ENCODE measurements at regions of chrX and their contacts with region 1.

Region 1: GRCh38 chrX:12174358-12174757 is 36.1 kb downstream of the FRMPD4 start:
- DNase-seq: no peak
- H3K4me3 ChIP-seq: no peak overlapping the region
- H3K27ac ChIP-seq: no peak overlapping the region
- H3K4me1 ChIP-seq: no peaks in the 10 kb centered on the region
- H3K27me3 ChIP-seq: peaks cover 0 to 47% of the 10 kb centered on the region in 2 donors
- CTCF ChIP-seq: no peak
- POLR2A ChIP-seq: no peak

Region 2: GRCh38 chrX:12142661-12143060 is 31.7 kb before region 1 on chrX:
- intact Hi-C with region 1: loop called (anchors 2 kb)
- DNase-seq: no peak
- H3K4me3 ChIP-seq: no peak overlapping the region
- H3K27ac ChIP-seq: no peak overlapping the region
- H3K4me1 ChIP-seq: no peaks in the 10 kb centered on the region
- H3K27me3 ChIP-seq: peaks cover 0 to 29% of the 10 kb centered on the region in 2 donors
- CTCF ChIP-seq: no peak
- POLR2A ChIP-seq: no peak

Region 3: DNA sequence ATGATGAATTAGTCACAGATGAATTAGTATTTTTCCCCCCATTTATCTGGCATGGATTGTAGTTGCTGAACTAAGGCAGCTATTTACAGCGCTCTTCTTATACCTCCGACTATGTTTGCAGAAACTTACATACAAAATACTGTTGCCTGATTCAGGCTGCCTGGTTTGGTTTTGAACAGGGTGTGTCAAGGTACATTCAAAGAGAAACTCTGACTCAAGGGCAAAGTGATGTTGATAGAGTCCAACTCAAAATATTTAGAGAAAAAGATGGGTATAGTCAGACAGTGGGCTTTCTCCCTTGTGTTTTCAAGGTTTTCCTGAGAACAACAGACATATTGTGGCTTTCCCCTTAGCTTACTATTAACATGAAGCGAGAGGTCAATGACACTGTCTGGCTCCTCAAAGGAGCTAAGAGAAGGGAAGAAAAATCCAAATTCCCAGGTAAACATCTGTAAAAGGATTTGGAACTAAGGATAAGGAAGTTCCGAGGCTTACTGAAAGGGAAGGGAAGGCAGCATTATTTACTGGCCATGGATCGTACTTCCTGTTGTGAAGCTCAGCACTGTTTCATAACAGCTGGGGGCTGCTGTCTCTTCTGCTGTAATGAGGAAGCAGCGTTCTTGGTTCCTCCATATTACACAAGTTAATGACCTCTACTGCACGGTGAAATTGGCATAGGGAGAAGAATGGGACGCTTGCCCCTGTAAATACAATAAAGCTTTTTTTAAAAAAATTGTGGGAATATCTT is 839.2 kb after region 1 on chrX:
- intact Hi-C with region 1: no loop called
- DNase-seq: no peak
- H3K4me3 ChIP-seq: no peak overlapping the region
- H3K27ac ChIP-seq: peak overlapping the region in 1 of 2 donors; percentile 29
- H3K4me1 ChIP-seq: no peaks in the 10 kb centered on the region
- H3K27me3 ChIP-seq: peaks cover 0 to 32% of the 10 kb centered on the region in 2 donors
- CTCF ChIP-seq: no peak
- POLR2A ChIP-seq: no peak